Naive thymus-derived CD4-positive, alpha-beta T cell (primary cell): ENCODE measurements at regions of chr19 and their contacts with region 1.

Region 1: GRCh38 chr19:9934132-9934950 is 2.0 kb downstream of the OLFM2 start:
- DNase-seq: peak; percentile 60 to 88 (median 73)
- ATAC-seq: peak; percentile 97
- H3K4me3 ChIP-seq: no peak overlapping the region
- H3K4me3 Mint-ChIP-seq: peak overlapping the region in 7 of 10 donors; percentile 28 to 84 (median 39)
- H3K27ac ChIP-seq: no peak overlapping the region
- H3K27ac Mint-ChIP-seq: peak overlapping the region in 1 of 9 donors; percentile 53
- H3K4me1 ChIP-seq: peaks cover 4 to 18% of the 10 kb centered on the region in 2 donors
- H3K4me1 Mint-ChIP-seq: peaks cover 17 to 33% (median 26%) of the 10 kb centered on the region in 7 donors
- H3K27me3 ChIP-seq: peaks cover 12 to 13% of the 10 kb centered on the region in 2 donors
- H3K27me3 Mint-ChIP-seq: peaks cover 45 to 67% (median 55%) of the 10 kb centered on the region in 5 donors

Region 2: DNA sequence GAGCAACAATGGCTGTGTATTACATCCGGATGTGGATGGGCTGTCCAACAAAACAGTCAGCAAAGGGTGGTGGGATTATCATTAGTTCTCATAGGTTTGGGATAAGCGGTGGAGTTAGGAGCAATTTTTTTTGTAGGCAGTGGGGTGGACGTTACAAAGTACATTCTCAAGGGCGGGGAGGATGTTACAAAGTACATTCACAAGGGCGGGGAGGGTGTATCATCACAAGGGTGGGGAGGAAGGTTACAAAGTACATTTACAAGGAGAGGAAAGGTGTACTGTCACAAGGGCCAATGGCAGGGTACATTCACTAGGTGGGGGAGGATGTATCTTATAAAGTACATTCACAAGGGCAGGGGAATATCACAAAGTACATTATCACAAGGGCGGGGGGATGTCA is 292.5 kb before region 1 on chr19:
- CTCF ChIA-PET with region 1: no interaction called
- POLR2A ChIA-PET with region 1: no interaction called
- intact Hi-C with region 1: no loop called
- DNase-seq: no peak
- ATAC-seq: no peak
- H3K4me3 ChIP-seq: no peak overlapping the region
- H3K4me3 Mint-ChIP-seq: no peak overlapping the region
- H3K27ac ChIP-seq: no peak overlapping the region
- H3K27ac Mint-ChIP-seq: no peak overlapping the region
- H3K4me1 ChIP-seq: no peaks in the 10 kb centered on the region
- H3K4me1 Mint-ChIP-seq: peaks cover 0 to 6% (median 0%) of the 10 kb centered on the region in 7 donors
- H3K27me3 ChIP-seq: no peaks in the 10 kb centered on the region
- H3K27me3 Mint-ChIP-seq: no peaks in the 10 kb centered on the region

Region 3: GRCh38 chr19:10000171-10000826 is 66.0 kb after region 1 on chr19:
- CTCF ChIA-PET with region 1: interaction called, 5 read pairs
- POLR2A ChIA-PET with region 1: no interaction called
- intact Hi-C with region 1: loop called (anchors 1 kb)
- DNase-seq: peak; percentile 34 to 74 (median 48)
- ATAC-seq: peak; percentile 54
- H3K4me3 ChIP-seq: no peak overlapping the region
- H3K4me3 Mint-ChIP-seq: no peak overlapping the region
- H3K27ac ChIP-seq: no peak overlapping the region
- H3K27ac Mint-ChIP-seq: peak overlapping the region in 2 of 9 donors; percentile 17 to 28
- H3K4me1 ChIP-seq: peaks cover 0 to 3% of the 10 kb centered on the region in 2 donors
- H3K4me1 Mint-ChIP-seq: peaks cover 0 to 8% (median 6%) of the 10 kb centered on the region in 7 donors
- H3K27me3 ChIP-seq: no peaks in the 10 kb centered on the region
- H3K27me3 Mint-ChIP-seq: peaks cover 5 to 54% (median 45%) of the 10 kb centered on the region in 5 donors

Region 4: GRCh38 chr19:10027158-10027693 is 92.9 kb after region 1 on chr19:
- CTCF ChIA-PET with region 1: interaction called, 27 read pairs
- POLR2A ChIA-PET with region 1: no interaction called
- intact Hi-C with region 1: loop called (anchors 1 kb)
- DNase-seq: no peak
- ATAC-seq: no peak
- H3K4me3 ChIP-seq: no peak overlapping the region
- H3K4me3 Mint-ChIP-seq: no peak overlapping the region
- H3K27ac ChIP-seq: no peak overlapping the region
- H3K27ac Mint-ChIP-seq: no peak overlapping the region
- H3K4me1 ChIP-seq: no peaks in the 10 kb centered on the region
- H3K4me1 Mint-ChIP-seq: peaks cover 0 to 4% (median 0%) of the 10 kb centered on the region in 7 donors
- H3K27me3 ChIP-seq: no peaks in the 10 kb centered on the region
- H3K27me3 Mint-ChIP-seq: peaks cover 3 to 24% (median 12%) of the 10 kb centered on the region in 5 donors

Region 5: GRCh38 chr19:10112895-10113591 is 178.7 kb after region 1 on chr19:
- CTCF ChIA-PET with region 1: interaction called, 3 read pairs
- POLR2A ChIA-PET with region 1: no interaction called
- intact Hi-C with region 1: loop called (anchors 2 to 5 kb)
- DNase-seq: peak; percentile 30 to 72 (median 52)
- ATAC-seq: peak; percentile 65
- H3K4me3 ChIP-seq: peak overlapping the region; percentile 33
- H3K4me3 Mint-ChIP-seq: peak overlapping the region in 9 of 10 donors; percentile 15 to 75 (median 50)
- H3K27ac ChIP-seq: peak overlapping the region; percentile 60
- H3K27ac Mint-ChIP-seq: peak overlapping the region; percentile 51 to 92 (median 83)
- H3K4me1 ChIP-seq: peaks cover 26 to 39% of the 10 kb centered on the region in 2 donors
- H3K4me1 Mint-ChIP-seq: peaks cover 0 to 43% (median 34%) of the 10 kb centered on the region in 7 donors
- H3K27me3 ChIP-seq: no peaks in the 10 kb centered on the region
- H3K27me3 Mint-ChIP-seq: no peaks in the 10 kb centered on the region

Region 6: DNA sequence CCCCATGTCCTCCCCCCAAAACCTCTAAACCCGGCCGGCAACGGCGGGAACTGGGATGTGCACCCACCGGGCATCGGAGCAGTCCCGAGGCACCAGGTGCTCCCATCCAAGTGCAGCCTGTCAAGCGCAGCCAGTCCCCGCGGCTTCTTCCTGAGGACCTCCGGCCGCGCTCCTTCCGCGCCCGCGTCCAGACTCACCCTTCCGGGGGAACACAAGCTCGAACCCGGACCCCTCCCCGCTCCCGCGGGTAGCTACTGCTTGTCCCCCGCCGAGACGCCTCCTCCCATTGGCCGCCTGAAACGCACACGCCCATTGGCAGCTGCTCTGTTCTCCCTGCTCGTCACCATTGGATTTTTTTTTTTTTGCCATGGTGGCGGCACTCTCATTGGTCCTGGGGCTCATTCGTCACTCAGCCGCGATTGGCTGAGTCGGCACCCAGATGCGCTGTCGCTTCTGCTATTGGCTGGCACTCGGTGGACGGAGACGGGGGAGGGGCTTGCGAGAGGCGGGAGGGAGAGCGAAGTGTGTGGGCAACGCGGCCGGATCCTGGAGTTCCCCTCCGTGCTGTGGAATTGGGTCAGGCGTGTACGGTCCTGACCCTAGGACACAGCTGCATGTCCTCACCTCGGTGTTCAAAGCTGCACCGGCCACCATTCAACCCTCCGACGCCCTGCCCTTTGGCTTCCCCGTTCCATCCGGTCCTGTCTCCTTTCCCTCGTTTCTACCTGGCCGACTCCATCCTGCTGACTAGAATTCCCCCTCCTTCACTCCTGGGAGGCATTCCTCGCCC is 446.2 kb after region 1 on chr19 and contains the start of gene TYK2:
- CTCF ChIA-PET with region 1: no interaction called
- POLR2A ChIA-PET with region 1: no interaction called
- intact Hi-C with region 1: loop called in 1 of 2 experiments (anchors 10 kb)
- DNase-seq: peak; percentile 94 to 99 (median 97)
- ATAC-seq: peak; percentile 98
- H3K4me3 ChIP-seq: peak within 1 kb of the TSS; percentile 94
- H3K4me3 Mint-ChIP-seq: peak within 1 kb of the TSS; percentile 93 to 99 (median 94)
- H3K27ac ChIP-seq: peak within 1 kb of the TSS; percentile 84
- H3K27ac Mint-ChIP-seq: peak within 1 kb of the TSS; percentile 88 to 97 (median 93)
- H3K4me1 ChIP-seq: peaks cover 5 to 10% of the 10 kb centered on the region in 2 donors
- H3K4me1 Mint-ChIP-seq: peaks cover 14 to 34% (median 23%) of the 10 kb centered on the region in 7 donors
- H3K27me3 ChIP-seq: no peaks in the 10 kb centered on the region
- H3K27me3 Mint-ChIP-seq: peaks cover 0 to 3% (median 0%) of the 10 kb centered on the region in 5 donors
- total RNA-seq, gene TYK2: 224 to 346 (median 284) TPM

Region 7: DNA sequence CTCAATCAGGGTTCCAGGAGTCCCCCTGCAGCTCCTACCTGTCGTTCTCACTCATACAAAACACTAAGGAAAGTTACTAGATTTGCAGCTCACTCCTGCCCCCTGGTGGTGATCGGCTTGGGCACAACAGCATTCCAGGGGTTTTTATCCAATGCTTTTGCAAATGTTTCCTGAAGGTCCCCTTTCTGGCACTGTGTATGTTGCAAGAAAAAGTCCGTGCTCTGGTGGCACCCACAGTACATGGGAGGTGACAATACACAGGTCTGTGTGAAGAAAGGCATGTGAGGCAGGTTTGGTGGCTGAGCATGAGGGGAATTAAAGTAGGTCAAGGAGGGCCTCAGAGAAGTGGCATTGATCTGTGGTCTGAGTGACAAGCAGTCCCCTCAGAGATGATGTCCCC is 454.6 kb after region 1 on chr19:
- CTCF ChIA-PET with region 1: interaction called, 4 read pairs
- POLR2A ChIA-PET with region 1: no interaction called
- intact Hi-C with region 1: loop called (anchors 1 to 10 kb)
- DNase-seq: peak; percentile 62 to 82 (median 74)
- ATAC-seq: peak; percentile 77
- H3K4me3 ChIP-seq: no peak overlapping the region
- H3K4me3 Mint-ChIP-seq: no peak overlapping the region
- H3K27ac ChIP-seq: no peak overlapping the region
- H3K27ac Mint-ChIP-seq: peak overlapping the region in 7 of 9 donors; percentile 7 to 56 (median 24)
- H3K4me1 ChIP-seq: no peaks in the 10 kb centered on the region
- H3K4me1 Mint-ChIP-seq: peaks cover 0 to 8% (median 4%) of the 10 kb centered on the region in 7 donors
- H3K27me3 ChIP-seq: no peaks in the 10 kb centered on the region
- H3K27me3 Mint-ChIP-seq: no peaks in the 10 kb centered on the region

Region 8: GRCh38 chr19:10431943-10432735 is 497.8 kb after region 1 on chr19:
- CTCF ChIA-PET with region 1: no interaction called
- POLR2A ChIA-PET with region 1: no interaction called
- intact Hi-C with region 1: loop called in 1 of 2 experiments (anchors 1 kb)
- DNase-seq: peak in 8 of 9 donors; percentile 44 to 64 (median 54)
- ATAC-seq: peak; percentile 58
- H3K4me3 ChIP-seq: peak overlapping the region; percentile 50
- H3K4me3 Mint-ChIP-seq: peak overlapping the region; percentile 82 to 94 (median 88)
- H3K27ac ChIP-seq: peak overlapping the region; percentile 46
- H3K27ac Mint-ChIP-seq: peak overlapping the region in 7 of 9 donors; percentile 26 to 95 (median 82)
- H3K4me1 ChIP-seq: peaks cover 19 to 33% of the 10 kb centered on the region in 2 donors
- H3K4me1 Mint-ChIP-seq: peaks cover 22 to 69% (median 33%) of the 10 kb centered on the region in 7 donors
- H3K27me3 ChIP-seq: peaks cover 0 to 9% of the 10 kb centered on the region in 2 donors
- H3K27me3 Mint-ChIP-seq: peaks cover 22 to 38% (median 31%) of the 10 kb centered on the region in 5 donors